Activated T-helper 1 cell treated with anti-CD3 and anti-CD28 coated beads, Interleukin-12 subunit alpha, Interleukin-12 subunit beta, Interleukin-2, Interleukin-4 antibody, amounts not matched to agents 30 ng/mL and 10 ng/mL and 1 ng/mL, durations not matched to agents 14 hours and 24 hours and 36 hours (primary cell): ENCODE measurements at regions of chr16 and their contacts with region 1.

Region 1: DNA sequence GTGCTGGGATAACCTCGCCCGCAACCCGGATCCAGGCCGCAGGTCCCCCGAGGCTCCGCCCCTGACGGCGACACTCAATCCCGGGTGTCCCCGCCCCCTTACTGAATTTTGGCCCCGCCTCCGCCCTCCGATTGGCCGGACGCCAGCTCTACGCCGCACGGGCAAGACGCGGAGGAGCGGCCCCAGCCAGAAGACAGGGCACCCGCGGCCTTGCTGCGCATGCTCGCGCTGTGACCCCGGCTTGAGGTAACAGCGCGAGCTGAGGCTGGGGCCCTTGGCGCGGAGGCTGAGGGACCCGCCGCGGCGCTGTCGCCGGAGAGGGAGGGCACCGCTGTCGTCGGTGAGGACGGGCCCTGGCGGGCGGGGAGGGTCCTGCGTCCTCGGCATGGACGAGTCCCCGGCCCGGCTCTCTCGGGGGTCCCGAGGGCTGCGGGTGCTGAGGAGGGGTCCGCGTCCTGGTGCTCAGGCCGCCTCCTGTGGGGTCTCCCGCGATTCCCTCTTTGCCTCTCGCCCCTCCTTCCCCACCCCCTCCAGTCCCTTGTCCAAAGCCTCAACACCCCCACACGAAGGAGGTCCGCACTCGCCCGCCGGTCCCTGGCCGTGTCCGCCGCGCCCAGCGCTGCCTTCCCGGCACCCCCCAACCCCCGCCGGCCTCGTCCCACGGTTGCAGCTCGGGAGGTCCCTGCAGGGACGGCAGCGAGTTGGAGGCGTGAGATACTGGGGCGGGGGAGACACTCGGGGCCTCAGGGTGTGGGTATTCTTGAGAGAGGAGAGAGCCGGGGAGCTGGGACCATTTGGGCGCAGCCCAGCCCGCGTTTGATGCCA is at the start of gene FLYWCH2:
- DNase-seq: peak; percentile 100
- H3K4me3 Mint-ChIP-seq: peak within 1 kb of the TSS; percentile 88
- H3K27ac Mint-ChIP-seq: peak within 1 kb of the TSS; percentile 95
- H3K4me1 Mint-ChIP-seq: peaks cover 16% of the 10 kb centered on the region
- H3K27me3 Mint-ChIP-seq: no peaks in the 10 kb centered on the region
- total RNA-seq, gene FLYWCH2: 22.9 and 25.4 TPM in 2 replicates

Region 2: DNA sequence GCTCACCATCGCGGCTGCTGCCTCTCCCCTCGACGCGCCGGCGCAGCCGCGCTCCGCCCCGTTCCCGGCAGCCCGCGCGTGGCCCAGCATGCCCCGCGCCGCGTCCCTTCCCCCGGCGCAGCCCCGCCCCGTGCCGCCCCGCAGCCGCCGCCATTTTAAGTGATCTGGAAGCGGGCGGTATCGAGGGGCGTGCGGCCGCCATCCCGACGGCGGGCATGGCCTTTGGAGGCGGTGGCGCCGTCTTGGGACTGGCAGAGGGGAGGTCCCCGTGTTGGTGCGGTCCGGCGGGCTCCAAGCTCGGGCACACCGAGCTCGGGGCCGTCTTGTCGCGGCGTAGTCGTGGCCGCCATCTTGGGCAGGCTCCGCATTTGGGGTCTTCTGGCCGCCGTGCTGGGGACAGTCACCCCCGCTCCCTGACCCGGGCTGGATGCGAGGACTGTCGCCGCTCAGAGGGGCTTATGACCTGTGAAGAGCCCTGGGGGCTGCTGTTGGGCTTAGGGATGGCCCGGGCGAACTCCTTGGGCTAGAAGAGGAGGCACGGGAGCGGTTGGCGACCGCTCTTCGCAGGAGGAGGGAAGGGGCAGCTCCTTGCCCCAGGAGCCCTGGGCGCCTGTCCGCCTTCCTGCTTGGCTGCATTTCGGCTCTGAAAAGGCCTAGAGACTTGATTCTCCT is 105.9 kb before region 1 on chr16 and contains the start of gene ELOB:
- intact Hi-C with region 1: loop called (anchors 1 kb)
- DNase-seq: peak; percentile 87
- H3K4me3 Mint-ChIP-seq: peak within 1 kb of the TSS; percentile 93
- H3K27ac Mint-ChIP-seq: peak within 1 kb of the TSS; percentile 94
- H3K4me1 Mint-ChIP-seq: peaks cover 27% of the 10 kb centered on the region
- H3K27me3 Mint-ChIP-seq: no peaks in the 10 kb centered on the region
- total RNA-seq, gene ELOB: 256 and 277 TPM in 2 replicates

Region 3: DNA sequence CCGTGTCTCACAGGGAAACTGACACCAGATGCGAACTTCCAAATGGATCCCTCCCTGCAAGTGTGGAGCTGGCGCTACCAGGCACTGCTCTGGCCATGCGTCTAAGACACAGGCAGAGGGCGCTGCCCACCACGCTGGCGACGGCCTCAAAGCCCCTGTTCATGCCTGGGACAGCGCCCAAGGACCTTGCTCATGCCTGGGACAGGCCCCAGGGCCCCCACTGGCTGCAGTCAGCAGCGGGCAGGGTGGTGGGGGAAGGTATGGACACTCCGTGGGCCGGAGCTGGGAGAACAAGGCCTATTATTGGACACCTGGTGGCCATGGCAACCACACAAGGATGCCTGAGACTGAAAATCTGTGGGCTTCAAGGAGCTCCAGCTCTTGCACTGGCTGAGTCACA is 44.3 kb before region 1 on chr16:
- intact Hi-C with region 1: loop called (anchors 2 kb)
- DNase-seq: peak; percentile 19
- H3K4me3 Mint-ChIP-seq: no peak overlapping the region
- H3K27ac Mint-ChIP-seq: peak overlapping the region; percentile 64
- H3K4me1 Mint-ChIP-seq: peaks cover 12% of the 10 kb centered on the region
- H3K27me3 Mint-ChIP-seq: peaks cover 3% of the 10 kb centered on the region

Region 4: GRCh38 chr16:2911580-2912329 is 28.5 kb after region 1 on chr16 and contains the start of gene FLYWCH1:
- intact Hi-C with region 1: loop called (anchors 1 kb)
- DNase-seq: peak; percentile 99
- H3K4me3 Mint-ChIP-seq: peak within 1 kb of the TSS; percentile 86
- H3K27ac Mint-ChIP-seq: peak within 1 kb of the TSS; percentile 76
- H3K4me1 Mint-ChIP-seq: peaks cover 24% of the 10 kb centered on the region
- H3K27me3 Mint-ChIP-seq: peaks cover 6% of the 10 kb centered on the region
- total RNA-seq, gene FLYWCH1: 61.1 and 65.7 TPM in 2 replicates

Region 5: DNA sequence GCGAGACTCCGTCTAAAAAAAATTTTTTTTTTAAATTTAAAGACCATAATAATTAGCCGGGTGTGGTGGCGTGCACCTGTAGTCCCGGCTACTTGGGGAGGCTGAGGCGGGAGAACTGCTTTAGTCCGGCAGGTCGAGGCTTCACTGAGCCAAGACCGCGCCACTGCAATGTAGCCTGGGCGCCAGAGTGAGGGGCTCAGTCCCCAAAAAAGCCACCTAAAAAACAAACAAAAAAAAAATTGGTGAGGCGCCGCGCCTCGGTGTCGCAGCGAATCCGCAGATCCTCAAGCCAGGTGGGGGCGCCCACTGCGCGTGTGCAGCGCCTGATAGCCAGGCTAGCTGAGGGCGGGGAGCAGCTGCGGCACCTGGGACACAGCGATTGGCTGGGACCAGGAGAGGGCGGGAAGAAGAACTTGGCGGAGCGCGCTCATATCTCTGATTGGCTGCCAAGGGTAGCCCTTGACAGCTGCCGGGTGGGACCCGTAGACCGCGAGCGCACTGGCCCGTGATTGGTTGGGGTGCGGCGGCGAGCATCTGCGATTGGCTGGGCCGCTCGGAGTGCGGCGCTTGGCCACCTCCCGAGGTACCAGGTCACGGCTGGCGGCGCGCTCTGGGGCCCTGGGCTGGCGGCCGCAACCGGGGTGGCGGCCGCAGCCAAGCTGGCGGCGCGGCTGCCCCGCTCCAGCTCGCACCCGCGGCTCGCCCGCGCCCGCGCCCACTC is 120.5 kb after region 1 on chr16:
- intact Hi-C with region 1: no loop called
- DNase-seq: peak; percentile 98
- H3K4me3 Mint-ChIP-seq: peak overlapping the region; percentile 74
- H3K27ac Mint-ChIP-seq: peak overlapping the region; percentile 21
- H3K4me1 Mint-ChIP-seq: peaks cover 22% of the 10 kb centered on the region
- H3K27me3 Mint-ChIP-seq: peaks cover 18% of the 10 kb centered on the region

Region 6: DNA sequence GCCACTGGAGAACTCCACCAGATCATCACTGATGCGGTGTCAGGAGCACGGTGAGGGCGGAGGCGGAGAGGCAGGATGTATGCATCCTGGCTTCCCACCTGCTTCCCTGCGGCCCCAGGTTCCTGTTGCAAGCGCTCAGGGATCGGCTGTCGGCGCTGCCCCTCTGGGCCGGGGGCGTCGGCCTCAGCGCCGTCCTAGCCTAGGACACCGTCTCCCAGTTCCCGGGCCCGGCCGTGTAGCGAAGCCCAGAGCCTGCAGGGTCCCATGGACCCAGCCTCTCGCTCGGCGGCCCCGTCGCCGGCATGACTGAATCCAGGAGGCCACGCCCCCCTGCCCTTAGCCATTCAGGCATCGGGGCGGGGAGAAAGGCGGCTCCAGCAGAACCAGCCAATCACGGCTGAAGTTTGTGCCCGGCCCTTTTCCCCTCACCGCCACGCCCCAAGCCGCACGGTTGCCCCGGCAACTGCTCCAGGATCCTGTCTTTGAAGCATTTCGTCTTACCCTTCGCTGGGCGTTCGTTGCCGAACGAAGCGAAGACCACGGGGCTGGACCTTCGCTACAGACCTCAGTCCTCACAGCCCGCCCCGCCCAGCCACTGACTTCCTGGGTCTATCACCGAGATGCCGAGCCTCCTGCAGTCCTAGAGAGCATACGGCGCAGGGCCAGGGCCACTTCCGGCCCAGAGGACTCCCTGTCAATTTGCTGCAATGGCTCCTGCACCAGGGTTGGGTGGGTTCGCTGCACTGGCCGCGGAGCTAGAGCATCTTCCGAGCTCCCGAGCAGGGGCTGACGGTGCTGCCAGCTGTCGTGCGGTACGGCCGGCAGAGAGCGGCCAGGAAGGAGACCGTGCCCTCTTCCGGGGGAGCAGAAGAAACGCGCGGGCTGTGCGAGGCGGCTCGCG is 241.0 kb after region 1 on chr16:
- intact Hi-C with region 1: loop called (anchors 2 kb)
- DNase-seq: peak; percentile 96
- H3K4me3 Mint-ChIP-seq: peak overlapping the region; percentile 97
- H3K27ac Mint-ChIP-seq: peak overlapping the region; percentile 93
- H3K4me1 Mint-ChIP-seq: peaks cover 42% of the 10 kb centered on the region
- H3K27me3 Mint-ChIP-seq: peaks cover 3% of the 10 kb centered on the region